ENCODE measurements at regions of chr3 and their contacts with region 1.

Region 1: GRCh38 chr3:170357176-170357919 is at the start of gene SKIL:
- DNase-seq: peak; percentile 91 to 98
- H3K4me3 ChIP-seq: peak within 1 kb of the TSS; percentile 74
- H3K27ac ChIP-seq: peak within 1 kb of the TSS; percentile 84
- H3K4me1 ChIP-seq: peaks cover 62% of the 10 kb centered on the region
- H3K27me3 ChIP-seq: no peaks in the 10 kb centered on the region
- CTCF ChIP-seq: no peak
- total RNA-seq, gene SKIL: 119 and 138 TPM in 2 replicates

Region 2: DNA sequence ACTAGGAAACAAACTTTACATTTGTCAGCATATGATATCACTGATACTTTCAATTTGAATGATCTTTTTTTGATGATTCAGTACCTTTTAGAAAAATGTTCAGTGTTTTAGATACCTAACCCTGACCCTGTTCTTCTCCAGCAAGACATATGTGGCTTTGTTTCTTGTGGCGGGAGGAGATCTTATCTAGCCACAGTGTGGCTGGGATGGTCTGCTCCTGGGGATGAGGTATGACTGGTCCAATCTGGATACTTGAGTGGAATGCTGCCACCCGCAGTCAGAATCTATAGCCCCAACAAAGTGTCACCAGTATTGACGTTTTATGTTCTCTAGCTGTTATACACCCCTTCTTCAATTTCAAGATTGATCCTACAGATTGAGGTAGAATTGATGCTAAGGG is 1822.6 kb before region 1 on chr3:
- CTCF ChIA-PET with region 1: no interaction called
- POLR2A ChIA-PET with region 1: no interaction called
- intact Hi-C with region 1: no loop called
- DNase-seq: peak in 1 of 2 experiments; percentile 6
- H3K4me3 ChIP-seq: no peak overlapping the region
- H3K27ac ChIP-seq: no peak overlapping the region
- H3K4me1 ChIP-seq: no peaks in the 10 kb centered on the region
- H3K27me3 ChIP-seq: no peaks in the 10 kb centered on the region
- CTCF ChIP-seq: no peak

Region 3: GRCh38 chr3:169772897-169773828 is 584.2 kb before region 1 on chr3 and contains the start of gene MYNN:
- CTCF ChIA-PET with region 1: no interaction called
- POLR2A ChIA-PET with region 1: no interaction called
- intact Hi-C with region 1: loop called (anchors 2 kb)
- DNase-seq: peak; percentile 84 to 91
- H3K4me3 ChIP-seq: peak within 1 kb of the TSS; percentile 84
- H3K27ac ChIP-seq: peak within 1 kb of the TSS; percentile 92
- H3K4me1 ChIP-seq: peaks cover 13% of the 10 kb centered on the region
- H3K27me3 ChIP-seq: no peaks in the 10 kb centered on the region
- CTCF ChIP-seq: no peak; the same call in 1 of the 2 replicates
- total RNA-seq, gene MYNN: 13.7 and 18.2 TPM in 2 replicates

Region 4: DNA sequence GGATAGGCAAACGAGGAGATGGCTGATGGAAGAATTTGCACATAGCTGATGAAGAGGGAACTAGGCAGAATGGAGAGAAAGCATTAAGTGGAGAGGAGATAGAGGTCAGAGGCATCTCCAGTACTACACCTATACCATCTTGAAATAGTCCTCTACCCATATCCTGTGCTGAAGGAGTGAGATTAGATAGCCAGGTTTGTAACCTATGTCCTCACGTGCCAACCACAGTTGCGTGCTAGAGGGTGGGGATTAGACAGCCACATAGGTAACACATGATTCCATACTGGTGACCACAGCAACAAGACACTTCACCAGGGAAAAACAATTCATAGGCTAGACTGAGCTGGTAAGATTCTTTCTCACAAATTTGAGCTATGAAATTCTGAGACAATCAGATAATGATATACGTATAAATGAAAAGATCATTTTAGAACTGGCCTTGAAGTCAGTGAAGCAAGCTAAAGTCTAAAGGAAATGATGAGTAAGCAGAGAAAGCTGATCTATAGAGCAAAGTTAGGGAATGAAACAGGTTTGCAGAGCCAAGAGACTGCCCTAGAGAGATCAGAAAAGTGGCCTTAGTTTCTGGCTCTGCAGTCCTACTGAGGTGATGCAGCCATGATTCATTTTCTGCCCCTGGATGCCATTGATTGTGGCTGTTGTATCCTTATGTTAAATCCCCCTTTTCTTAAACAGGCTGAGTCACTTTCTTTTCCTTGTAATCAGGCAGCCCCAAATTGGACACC is 566.5 kb before region 1 on chr3:
- CTCF ChIA-PET with region 1: no interaction called
- POLR2A ChIA-PET with region 1: no interaction called
- intact Hi-C with region 1: no loop called
- DNase-seq: no peak
- H3K4me3 ChIP-seq: no peak overlapping the region
- H3K27ac ChIP-seq: no peak overlapping the region
- H3K4me1 ChIP-seq: no peaks in the 10 kb centered on the region
- H3K27me3 ChIP-seq: no peaks in the 10 kb centered on the region
- CTCF ChIP-seq: no peak

Region 5: GRCh38 chr3:170078620-170079281 is 278.6 kb before region 1 on chr3:
- CTCF ChIA-PET with region 1: no interaction called
- POLR2A ChIA-PET with region 1: no interaction called
- intact Hi-C with region 1: no loop called
- DNase-seq: no peak
- H3K4me3 ChIP-seq: no peak overlapping the region
- H3K27ac ChIP-seq: no peak overlapping the region
- H3K4me1 ChIP-seq: 0 out of 2 replicates have a peak, but pooled peaks cover 4% of the 10 kb centered on the region
- H3K27me3 ChIP-seq: no peaks in the 10 kb centered on the region
- CTCF ChIP-seq: 0 out of 2 replicates have a peak, but pooled peaks have one; percentile 29

Region 6: GRCh38 chr3:170233530-170233929 is 123.8 kb before region 1 on chr3:
- CTCF ChIA-PET with region 1: no interaction called
- POLR2A ChIA-PET with region 1: interaction called, 14 read pairs
- intact Hi-C with region 1: no loop called
- DNase-seq: peak; percentile 45 to 91
- H3K4me3 ChIP-seq: no peak overlapping the region
- H3K27ac ChIP-seq: peak overlapping the region; percentile 54
- H3K4me1 ChIP-seq: peaks cover 24% of the 10 kb centered on the region
- H3K27me3 ChIP-seq: no peaks in the 10 kb centered on the region
- CTCF ChIP-seq: no peak

Region 7: DNA sequence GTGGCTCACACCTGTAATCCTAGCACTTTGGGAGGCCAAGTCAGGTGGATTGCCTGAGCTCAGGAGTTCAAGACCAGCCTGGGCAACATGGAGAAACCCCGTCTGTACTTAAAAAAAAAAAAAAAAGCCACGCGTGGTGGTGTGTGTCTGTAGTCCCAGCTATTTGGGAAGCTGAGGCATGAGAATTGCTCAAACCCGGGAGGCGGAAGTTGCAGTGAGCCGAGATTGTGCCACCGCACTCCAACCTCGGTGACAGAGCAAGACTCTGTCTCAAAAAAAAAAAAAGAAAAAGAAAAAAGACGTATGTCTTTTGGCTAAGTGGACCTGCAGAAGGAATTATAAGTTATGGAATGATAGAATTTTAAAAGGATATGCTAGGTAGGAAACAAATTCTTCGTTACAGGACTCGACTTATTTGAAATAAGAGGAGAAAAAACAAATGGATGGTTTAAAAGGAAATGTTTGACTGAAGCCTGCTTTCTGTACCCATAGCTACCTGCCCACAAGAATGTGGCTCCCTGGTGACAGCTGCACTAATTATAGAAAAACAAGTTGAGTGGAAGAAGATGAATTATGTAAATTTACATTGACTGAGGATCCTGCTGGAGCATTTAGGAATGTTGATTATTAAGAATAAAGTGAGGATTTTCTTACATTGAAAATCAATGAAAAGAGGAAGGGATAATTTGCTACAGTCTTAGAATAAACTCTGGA is 35.9 kb before region 1 on chr3:
- CTCF ChIA-PET with region 1: interaction called, 10 read pairs
- POLR2A ChIA-PET with region 1: interaction called, 38 read pairs
- intact Hi-C with region 1: loop called (anchors 1 kb)
- DNase-seq: peak; percentile 63 to 84
- H3K4me3 ChIP-seq: no peak overlapping the region
- H3K27ac ChIP-seq: peak overlapping the region; percentile 52
- H3K4me1 ChIP-seq: peaks cover 35% of the 10 kb centered on the region
- H3K27me3 ChIP-seq: no peaks in the 10 kb centered on the region
- CTCF ChIP-seq: no peak

Region 8: DNA sequence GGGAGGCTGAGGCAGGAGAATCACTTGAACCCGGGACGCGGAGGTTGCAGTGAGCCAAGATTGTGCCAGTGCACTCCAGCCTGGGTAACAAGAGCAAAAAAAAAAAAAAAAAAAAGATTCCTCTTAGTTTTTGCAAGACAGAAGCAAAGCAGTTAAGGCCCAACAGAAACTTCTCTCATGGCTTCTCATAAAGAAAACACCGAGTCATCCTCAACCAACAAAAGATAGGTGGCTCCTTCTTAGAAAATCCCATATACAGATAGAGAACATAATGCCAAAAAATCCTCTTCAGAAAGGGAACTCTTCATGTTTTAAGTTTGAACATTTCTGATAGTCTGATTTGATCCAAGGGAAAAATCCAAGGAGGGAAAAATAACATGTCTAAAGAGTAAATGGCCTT is 12.4 kb before region 1 on chr3:
- CTCF ChIA-PET with region 1: interaction called, 6 read pairs
- POLR2A ChIA-PET with region 1: interaction called, 4 read pairs
- intact Hi-C with region 1: loop called (anchors 1 kb)
- DNase-seq: no peak
- H3K4me3 ChIP-seq: no peak overlapping the region
- H3K27ac ChIP-seq: peak overlapping the region; percentile 62
- H3K4me1 ChIP-seq: peaks cover 35% of the 10 kb centered on the region
- H3K27me3 ChIP-seq: no peaks in the 10 kb centered on the region
- CTCF ChIP-seq: no peak

Region 9: DNA sequence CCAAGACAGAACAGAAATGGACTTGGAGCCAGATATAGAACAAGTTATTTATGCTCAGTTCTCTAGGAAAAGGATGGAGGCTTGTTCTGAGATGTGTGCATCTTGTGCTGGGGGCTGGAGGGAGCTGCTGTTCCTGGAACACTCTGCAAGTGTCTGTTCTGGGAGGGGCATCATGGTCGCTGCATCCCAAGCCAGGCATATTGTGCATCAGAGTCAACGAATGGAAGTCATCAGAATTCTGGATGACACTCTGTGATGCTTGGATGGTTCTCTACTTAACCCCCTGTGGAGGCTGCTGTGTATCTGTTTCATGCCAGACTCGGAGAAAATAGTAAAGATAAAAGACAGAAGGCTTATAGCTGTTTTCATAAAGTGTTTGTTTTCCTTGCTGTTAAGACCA is 478.0 kb after region 1 on chr3:
- CTCF ChIA-PET with region 1: interaction called, 11 read pairs
- POLR2A ChIA-PET with region 1: no interaction called
- intact Hi-C with region 1: no loop called
- DNase-seq: no peak
- H3K4me3 ChIP-seq: no peak overlapping the region
- H3K27ac ChIP-seq: no peak overlapping the region
- H3K4me1 ChIP-seq: no peaks in the 10 kb centered on the region
- H3K27me3 ChIP-seq: no peaks in the 10 kb centered on the region
- CTCF ChIP-seq: no peak